ENCODE measurements at regions of chr9 and their contacts with region 1.

Region 1: DNA sequence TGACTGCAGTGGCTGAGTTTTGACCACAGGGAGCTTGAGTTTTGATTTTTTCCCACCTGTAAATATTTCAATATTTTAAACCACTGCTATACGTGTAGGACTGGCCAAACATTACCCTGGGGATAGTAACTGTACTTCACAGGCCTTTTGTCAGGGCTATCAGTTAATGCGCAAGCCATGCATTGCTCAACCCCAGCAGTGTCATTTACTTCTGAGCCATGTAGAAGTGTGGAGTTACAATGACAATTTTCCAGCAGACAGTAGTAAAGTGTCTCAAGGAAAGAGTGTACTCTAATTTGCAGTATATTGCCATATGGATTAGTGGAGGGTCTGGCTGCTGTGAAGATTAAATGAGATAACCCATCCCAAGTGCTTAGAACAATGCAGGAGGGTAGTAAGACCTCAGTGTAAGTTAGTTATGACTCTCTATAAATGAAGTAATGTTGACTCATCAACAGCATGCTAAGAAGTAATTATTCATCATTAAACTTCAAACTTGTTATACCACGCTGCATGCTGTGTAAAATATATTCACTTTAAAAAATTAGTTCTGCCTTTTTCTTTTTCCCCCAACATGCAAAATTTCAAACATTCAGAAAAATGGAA is 489.2 kb downstream of the KDM4C start:
- DNase-seq: peak; percentile 5
- H3K27ac ChIP-seq: no peak overlapping the region
- CTCF ChIP-seq: no peak

Region 2: GRCh38 chr9:7265181-7265580 is 18.2 kb after region 1 on chr9:
- CTCF ChIA-PET with region 1: interaction called, 10 read pairs
- POLR2A ChIA-PET with region 1: no interaction called
- DNase-seq: no peak
- H3K27ac ChIP-seq: no peak overlapping the region
- CTCF ChIP-seq: no peak

Region 3: GRCh38 chr9:7591501-7591900 is 344.5 kb after region 1 on chr9:
- CTCF ChIA-PET with region 1: no interaction called
- POLR2A ChIA-PET with region 1: no interaction called
- DNase-seq: no peak
- H3K27ac ChIP-seq: no peak overlapping the region
- CTCF ChIP-seq: no peak

Measured in RWPE1 (cell line).